Activated CD8-positive, alpha-beta T cell treated with anti-CD3 and anti-CD28 coated beads for 36 hours (primary cell): ENCODE measurements at regions of chr2 and their contacts with region 1.

Region 1: DNA sequence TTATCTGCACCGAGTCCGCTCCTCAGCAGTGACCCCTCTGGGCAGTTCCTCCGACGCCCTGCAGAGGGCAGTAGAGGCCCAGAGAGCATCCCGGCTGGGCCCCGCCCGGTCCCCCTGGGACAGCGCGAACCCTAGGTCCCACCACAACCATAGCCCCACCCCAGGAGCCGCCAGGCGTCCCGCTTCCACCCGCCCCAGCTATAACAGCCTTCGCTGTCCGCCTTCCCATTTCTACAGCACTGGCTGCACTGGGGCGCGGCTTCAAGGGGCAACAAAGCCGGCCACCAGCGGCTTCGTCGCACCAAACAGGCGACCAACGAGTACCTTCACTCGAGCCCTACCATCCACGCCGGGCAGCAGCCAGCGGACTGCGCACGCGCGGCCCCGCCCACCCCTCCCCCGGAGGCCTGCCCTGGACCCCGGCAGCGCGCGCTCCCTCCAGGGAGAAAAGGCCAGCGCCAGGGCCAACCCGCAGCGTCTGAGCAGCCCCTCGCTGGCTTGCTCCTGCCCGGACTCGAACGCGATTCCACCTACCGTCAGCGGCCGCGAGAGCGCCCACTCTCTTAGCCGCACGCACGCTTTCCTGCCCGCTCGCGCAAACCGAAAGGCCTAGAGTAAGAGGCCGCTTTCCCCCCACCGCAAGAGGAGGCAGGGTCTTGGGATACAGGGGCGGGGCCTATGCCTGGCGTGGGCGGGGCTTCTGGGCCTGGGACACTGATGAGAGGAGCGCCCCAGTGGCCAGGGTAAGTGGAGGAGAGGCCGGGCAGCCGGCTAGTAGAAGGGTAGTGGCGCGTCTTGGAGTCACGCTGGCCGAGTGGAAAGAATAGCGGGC is at the start of gene NHEJ1:
- DNase-seq: peak; percentile 98
- ATAC-seq: peak; percentile 92
- H3K4me3 Mint-ChIP-seq: peak within 1 kb of the TSS; percentile 85
- H3K27ac Mint-ChIP-seq: peak within 1 kb of the TSS; percentile 93
- H3K4me1 Mint-ChIP-seq: peaks cover 18% of the 10 kb centered on the region
- H3K27me3 Mint-ChIP-seq: no peaks in the 10 kb centered on the region
- CTCF ChIP-seq: peak; percentile 99
- total RNA-seq, gene NHEJ1: 22.4 to 26.3 TPM

Region 2: DNA sequence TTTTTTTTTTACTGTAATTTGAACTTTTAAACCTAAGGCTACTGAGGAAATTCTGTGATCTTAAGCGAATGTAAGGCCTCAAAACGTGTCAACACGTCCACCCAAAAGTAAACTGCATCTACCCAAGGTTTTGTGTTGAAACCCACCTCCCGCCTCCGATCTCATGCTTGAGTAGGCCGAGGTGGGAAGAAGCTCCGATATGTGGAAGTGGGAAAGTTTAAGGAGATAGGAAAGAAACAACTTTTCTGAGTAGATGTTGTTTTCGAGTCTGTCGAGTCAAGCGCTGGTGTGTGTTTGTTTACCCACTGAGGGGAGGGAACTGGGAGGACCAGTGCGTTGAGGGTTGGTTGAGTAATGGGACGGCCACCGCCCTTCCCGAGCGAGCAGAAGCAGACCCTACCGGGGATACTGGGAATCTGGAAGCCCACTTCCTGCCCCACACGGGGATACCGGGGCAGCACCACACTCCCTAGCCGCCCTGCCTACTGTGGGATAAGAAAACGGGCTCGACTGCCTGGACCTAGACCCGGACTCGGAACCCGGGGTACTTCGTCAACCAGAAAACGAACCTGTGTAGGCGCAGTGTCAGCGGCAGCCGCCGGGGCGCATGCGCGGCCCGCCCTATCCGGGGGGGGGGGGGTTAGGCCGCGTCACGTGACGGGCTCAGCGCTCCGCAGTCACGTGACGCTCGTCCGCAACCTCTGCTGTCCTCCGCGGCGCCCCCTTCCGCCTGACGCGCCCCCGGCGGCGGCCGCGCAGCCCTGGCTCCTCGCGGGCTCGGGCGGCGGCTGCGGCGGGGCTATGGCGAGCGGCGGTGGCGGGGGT is 17.4 kb after region 1 on chr2 and contains the start of gene RETREG2:
- CTCF ChIA-PET with region 1: interaction called, 98 read pairs
- POLR2A ChIA-PET with region 1: interaction called, 7 read pairs
- intact Hi-C with region 1: loop called (anchors 2 kb)
- DNase-seq: peak; percentile 82
- ATAC-seq: peak; percentile 46
- H3K4me3 Mint-ChIP-seq: peak within 1 kb of the TSS; percentile 97
- H3K27ac Mint-ChIP-seq: peak within 1 kb of the TSS; percentile 97
- H3K4me1 Mint-ChIP-seq: peaks cover 57% of the 10 kb centered on the region
- H3K27me3 Mint-ChIP-seq: no peaks in the 10 kb centered on the region
- CTCF ChIP-seq: peak; percentile 40
- total RNA-seq, gene RETREG2: 63.8 to 67.8 TPM

Region 3: DNA sequence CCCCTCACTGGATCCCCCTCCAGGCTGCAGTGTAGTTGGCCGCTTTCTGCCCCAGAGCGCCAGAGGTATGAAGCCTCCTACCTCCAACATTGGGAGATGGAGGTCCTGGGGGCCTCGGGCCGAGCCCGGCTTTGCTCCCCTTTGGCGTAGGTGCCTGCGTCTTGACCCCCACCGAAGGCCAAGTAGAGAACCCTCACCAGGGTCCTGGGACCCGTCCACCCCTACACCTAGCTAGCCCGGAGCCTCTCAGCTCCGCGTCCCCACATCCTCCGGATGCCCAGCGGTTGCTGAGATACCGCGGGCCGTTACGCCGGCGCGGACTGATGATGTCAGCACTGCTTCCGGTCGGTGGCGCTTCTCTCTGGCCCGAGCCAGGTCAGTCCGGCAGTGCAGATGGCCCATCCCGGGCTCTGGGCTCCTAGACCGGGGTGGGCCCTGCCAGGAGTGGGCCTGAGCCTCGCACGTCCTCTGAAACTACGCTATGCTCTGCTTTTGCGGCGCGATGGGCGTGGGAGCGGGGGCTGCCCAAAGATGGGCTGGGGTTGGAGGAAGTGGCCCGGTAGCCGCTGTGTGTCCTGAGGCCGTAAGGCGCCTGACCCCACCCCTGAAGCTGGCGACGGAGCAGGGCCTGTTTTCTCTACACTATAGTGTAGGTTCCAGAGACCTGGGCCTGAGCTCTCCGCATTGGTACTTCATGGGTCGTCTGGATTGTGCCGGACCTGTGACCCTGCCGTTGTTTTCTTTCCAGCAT is 84.9 kb after region 1 on chr2 and contains the starts of genes GLB1L and STK16:
- CTCF ChIA-PET with region 1: interaction called, 10 read pairs
- POLR2A ChIA-PET with region 1: no interaction called
- intact Hi-C with region 1: no loop called
- DNase-seq: peak; percentile 93
- ATAC-seq: peak; percentile 58
- H3K4me3 Mint-ChIP-seq: peak within 1 kb of the TSS; percentile 98
- H3K27ac Mint-ChIP-seq: peak within 1 kb of the TSS; percentile 99
- H3K4me1 Mint-ChIP-seq: peaks cover 61% of the 10 kb centered on the region
- H3K27me3 Mint-ChIP-seq: no peaks in the 10 kb centered on the region
- CTCF ChIP-seq: no peak
- total RNA-seq, gene GLB1L: 1.2 to 2.8 TPM
- total RNA-seq, gene STK16: 34.4 to 35.4 TPM

Region 4: GRCh38 chr2:219300022-219300421 is 139.6 kb after region 1 on chr2:
- CTCF ChIA-PET with region 1: interaction called, 50 read pairs
- POLR2A ChIA-PET with region 1: interaction called, 3 read pairs
- intact Hi-C with region 1: loop called (anchors 5 kb)
- DNase-seq: no peak
- ATAC-seq: no peak
- H3K4me3 Mint-ChIP-seq: no peak overlapping the region
- H3K27ac Mint-ChIP-seq: no peak overlapping the region
- H3K4me1 Mint-ChIP-seq: peaks cover 25% of the 10 kb centered on the region
- H3K27me3 Mint-ChIP-seq: peaks cover 11% of the 10 kb centered on the region
- CTCF ChIP-seq: no peak